GM12878 (cell line): ENCODE measurements at regions of chr12 and their contacts with region 1.

Region 1: GRCh38 chr12:23055004-23055403 is 430.0 kb downstream of the ETNK1 start:
- DNase-seq: no peak
- ATAC-seq: peak; percentile 52; the same call in 1 of the 3 replicates
- H3K4me3 ChIP-seq: no peak overlapping the region
- H3K27ac ChIP-seq: no peak overlapping the region
- H3K4me1 ChIP-seq: no peaks in the 10 kb centered on the region
- H3K27me3 ChIP-seq: no peaks in the 10 kb centered on the region
- CTCF ChIP-seq: peak; percentile 25 to 44 (median 31); a peak in 4 of 6 replicates
- EP300 ChIP-seq: no peak
- POLR2A ChIP-seq: no peak
- RAD21 ChIP-seq: peak; percentile 56

Region 2: GRCh38 chr12:22709292-22709691 is 345.7 kb before region 1 on chr12:
- CTCF ChIA-PET with region 1: no interaction called
- POLR2A ChIA-PET with region 1: no interaction called
- RAD21 ChIA-PET with region 1: no interaction called
- SMC1A ChIA-PET with region 1: no interaction called
- in situ Hi-C with region 1: no loop called
- intact Hi-C with region 1: loop called (anchors 1 kb)
- DNase-seq: peak; percentile 15
- ATAC-seq: peak; percentile 73
- H3K4me3 ChIP-seq: no peak overlapping the region
- H3K27ac ChIP-seq: no peak overlapping the region
- H3K4me1 ChIP-seq: no peaks in the 10 kb centered on the region
- H3K27me3 ChIP-seq: no peaks in the 10 kb centered on the region
- CTCF ChIP-seq: peak; percentile 37 to 54 (median 45); a peak in 5 of 6 replicates
- EP300 ChIP-seq: no peak
- POLR2A ChIP-seq: no peak
- RAD21 ChIP-seq: peak; percentile 66

Region 3: DNA sequence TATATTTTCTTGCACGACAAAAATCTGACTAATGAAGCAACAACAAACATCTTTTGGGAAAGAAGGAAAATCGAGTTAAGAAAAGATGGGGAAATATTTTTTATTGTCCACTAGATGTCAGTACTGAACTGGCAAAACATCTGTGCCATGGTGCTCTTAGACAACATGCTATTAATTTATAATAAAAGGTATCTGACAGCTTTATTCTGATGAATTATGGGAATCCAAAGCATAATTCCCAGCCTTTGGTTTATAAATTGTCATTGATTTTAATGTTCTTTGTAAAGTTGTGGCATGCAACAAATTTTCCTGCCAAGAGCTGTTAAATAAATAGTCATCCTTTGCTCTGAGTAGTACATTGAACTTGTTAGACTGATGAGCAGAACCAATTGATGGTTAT is 198.8 kb before region 1 on chr12:
- CTCF ChIA-PET with region 1: interaction called, 14 read pairs
- POLR2A ChIA-PET with region 1: no interaction called
- RAD21 ChIA-PET with region 1: interaction called, 3 read pairs
- SMC1A ChIA-PET with region 1: no interaction called
- in situ Hi-C with region 1: no loop called
- intact Hi-C with region 1: loop called (anchors 1 kb)
- DNase-seq: no peak
- ATAC-seq: no peak
- H3K4me3 ChIP-seq: no peak overlapping the region
- H3K27ac ChIP-seq: no peak overlapping the region
- H3K4me1 ChIP-seq: no peaks in the 10 kb centered on the region
- H3K27me3 ChIP-seq: no peaks in the 10 kb centered on the region; a peak in 1 of 4 replicates
- CTCF ChIP-seq: peak; percentile 35 to 56 (median 45); a peak in 5 of 6 replicates
- EP300 ChIP-seq: no peak
- POLR2A ChIP-seq: no peak
- RAD21 ChIP-seq: peak; percentile 62

Region 4: GRCh38 chr12:23014749-23015148 is 40.3 kb before region 1 on chr12:
- CTCF ChIA-PET with region 1: no interaction called
- POLR2A ChIA-PET with region 1: no interaction called
- RAD21 ChIA-PET with region 1: no interaction called
- SMC1A ChIA-PET with region 1: no interaction called
- in situ Hi-C with region 1: no loop called
- intact Hi-C with region 1: no loop called
- DNase-seq: no peak
- ATAC-seq: no peak
- H3K4me3 ChIP-seq: no peak overlapping the region
- H3K27ac ChIP-seq: no peak overlapping the region
- H3K4me1 ChIP-seq: no peaks in the 10 kb centered on the region
- H3K27me3 ChIP-seq: no peaks in the 10 kb centered on the region
- CTCF ChIP-seq: no peak
- EP300 ChIP-seq: no peak
- POLR2A ChIP-seq: no peak
- RAD21 ChIP-seq: no peak